PC-3 (cell line): ENCODE measurements at regions of chr7 and their contacts with region 1.

Region 1: GRCh38 chr7:80596933-80597517 is 41.4 kb upstream of the CD36 start:
- DNase-seq: no peak
- ATAC-seq: no peak
- H3K4me3 ChIP-seq: no peak overlapping the region
- H3K27ac ChIP-seq: no peak overlapping the region
- H3K4me1 ChIP-seq: 0 out of 2 replicates have a peak, but pooled peaks cover 15% of the 10 kb centered on the region
- H3K27me3 ChIP-seq: no peaks in the 10 kb centered on the region
- CTCF ChIP-seq: no peak

Region 2: DNA sequence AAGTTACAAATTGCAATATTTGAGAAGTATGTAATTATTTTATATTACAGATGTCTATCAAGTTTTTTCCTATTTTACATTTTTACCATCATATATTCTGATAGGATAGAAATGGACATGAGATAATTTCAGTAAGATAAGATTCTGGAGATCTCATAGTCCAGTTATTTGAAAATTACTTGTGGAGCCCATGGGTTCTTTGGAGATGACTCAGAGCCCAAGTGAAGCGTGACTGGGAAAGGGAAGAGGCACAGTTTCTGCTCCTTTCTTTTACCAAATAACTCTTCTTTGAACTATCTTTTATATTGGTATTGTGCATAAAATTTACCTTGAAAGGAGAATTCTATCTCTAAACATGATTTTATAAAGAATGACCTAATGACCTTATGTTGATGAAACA is 43.8 kb after region 1 on chr7:
- CTCF ChIA-PET with region 1: no interaction called
- POLR2A ChIA-PET with region 1: no interaction called
- intact Hi-C with region 1: loop called (anchors 5 kb)
- DNase-seq: peak; percentile 66
- ATAC-seq: peak; percentile 62; the same call in 1 of the 2 replicates
- H3K4me3 ChIP-seq: no peak overlapping the region
- H3K27ac ChIP-seq: no peak overlapping the region
- H3K4me1 ChIP-seq: peaks cover 23% of the 10 kb centered on the region
- H3K27me3 ChIP-seq: no peaks in the 10 kb centered on the region
- CTCF ChIP-seq: no peak